HCT116 (cell line): ENCODE measurements at regions of chr2 and their contacts with region 1.

Region 1: DNA sequence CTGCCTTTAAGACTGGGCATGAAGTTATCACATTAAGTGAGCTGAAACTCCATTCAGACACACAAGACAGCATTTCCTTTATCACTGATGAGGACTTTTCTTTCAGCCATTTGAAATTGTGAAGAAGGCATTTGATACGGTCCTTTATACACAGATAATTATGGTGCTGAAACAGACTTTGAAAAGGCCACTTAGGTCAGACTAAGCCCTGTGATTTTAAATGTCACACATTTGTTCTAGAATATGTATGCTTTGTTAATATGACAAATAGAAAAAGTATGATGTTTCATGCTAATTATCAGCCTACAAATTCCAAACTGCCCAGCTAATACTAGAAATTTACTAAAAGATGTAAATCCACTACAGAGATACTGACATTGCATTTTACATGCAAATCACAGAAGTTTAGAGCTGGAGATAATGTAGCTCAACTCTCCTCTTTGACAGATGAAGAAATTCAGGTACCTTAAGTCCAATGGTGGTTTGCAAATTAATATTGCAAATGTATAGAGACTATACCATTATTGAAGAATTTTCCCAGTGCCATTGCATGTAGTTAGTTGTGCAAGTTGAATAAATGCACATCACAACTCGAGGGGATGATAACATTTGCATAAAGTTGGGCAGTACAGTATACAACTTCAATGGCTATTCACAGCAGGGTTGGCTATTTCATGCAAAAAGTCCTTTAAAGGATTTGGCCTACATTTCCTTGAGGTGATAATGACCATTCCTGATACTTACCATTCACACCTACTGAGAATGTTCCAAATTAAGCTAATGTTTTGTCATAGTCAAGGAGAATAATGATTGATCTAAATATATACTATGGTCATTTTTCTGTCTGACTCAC is 175.2 kb downstream of the UPP2 start:
- DNase-seq: no peak
- ATAC-seq: no peak
- H3K4me3 ChIP-seq: no peak overlapping the region
- H3K27ac ChIP-seq: no peak overlapping the region
- H3K4me1 ChIP-seq: no peaks in the 10 kb centered on the region
- H3K27me3 ChIP-seq: no peaks in the 10 kb centered on the region
- CTCF ChIP-seq: no peak
- POLR2A ChIP-seq: no peak
- RAD21 ChIP-seq: no peak

Region 2: DNA sequence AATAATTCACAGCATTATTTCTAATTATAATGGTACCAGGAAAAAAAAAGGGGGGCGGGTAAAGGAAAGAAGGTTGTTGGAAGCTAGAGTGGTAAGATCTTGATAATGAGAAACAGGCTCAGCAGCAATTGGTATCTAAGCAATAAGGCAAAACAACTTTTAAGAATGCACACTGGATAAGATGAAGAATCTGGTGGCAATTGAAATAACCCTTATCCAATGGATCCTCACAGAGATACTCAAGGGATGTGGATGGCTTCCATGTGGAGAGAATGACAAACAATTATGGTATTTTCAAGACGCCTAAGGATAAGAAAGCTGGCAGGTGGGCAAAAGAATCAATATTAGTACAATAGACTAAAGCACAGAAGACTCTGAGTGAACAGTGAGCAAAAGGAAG is 21.6 kb before region 1 on chr2:
- CTCF ChIA-PET with region 1: no interaction called
- POLR2A ChIA-PET with region 1: no interaction called
- RAD21 ChIA-PET with region 1: no interaction called
- intact Hi-C with region 1: no loop called
- DNase-seq: no peak
- ATAC-seq: no peak
- H3K4me3 ChIP-seq: no peak overlapping the region
- H3K27ac ChIP-seq: no peak overlapping the region
- H3K4me1 ChIP-seq: no peaks in the 10 kb centered on the region
- H3K27me3 ChIP-seq: no peaks in the 10 kb centered on the region
- CTCF ChIP-seq: no peak
- POLR2A ChIP-seq: no peak
- RAD21 ChIP-seq: no peak

Region 3: GRCh38 chr2:158325782-158326340 is 49.0 kb after region 1 on chr2:
- CTCF ChIA-PET with region 1: no interaction called
- POLR2A ChIA-PET with region 1: no interaction called
- RAD21 ChIA-PET with region 1: no interaction called
- intact Hi-C with region 1: loop called (anchors 2 kb)
- DNase-seq: no peak
- ATAC-seq: no peak
- H3K4me3 ChIP-seq: no peak overlapping the region
- H3K27ac ChIP-seq: no peak overlapping the region
- H3K4me1 ChIP-seq: peaks cover 4 to 6% of the 10 kb centered on the region in 2 experiments; a peak in 3 of 4 replicates
- H3K27me3 ChIP-seq: no peaks in the 10 kb centered on the region
- CTCF ChIP-seq: no peak
- POLR2A ChIP-seq: no peak
- RAD21 ChIP-seq: no peak